ENCODE measurements at regions of chr11 and their contacts with region 1.

Region 1: GRCh38 chr11:59615637-59616395 is at the start of gene OSBP:
- DNase-seq: peak; percentile 98
- CTCF ChIP-seq: no peak

Region 2: DNA sequence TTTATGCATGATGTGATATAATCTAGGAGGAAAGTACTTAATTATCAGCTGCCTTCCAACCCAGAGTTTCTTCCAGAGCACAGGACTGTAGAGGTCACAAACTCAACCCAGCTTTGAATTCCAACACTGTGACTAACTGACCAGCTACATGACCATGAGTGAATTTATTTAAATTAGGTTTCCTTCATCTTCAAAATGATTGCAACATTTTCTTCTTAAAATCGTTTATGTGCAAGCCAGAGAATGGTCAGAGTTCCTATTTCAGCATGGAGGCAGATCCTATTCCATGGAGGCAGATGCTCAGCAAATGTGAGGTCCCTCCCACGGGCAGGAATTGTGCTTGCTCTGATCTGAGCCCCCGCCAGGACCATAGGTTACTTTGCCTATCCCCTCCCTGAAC is 42.6 kb before region 1 on chr11:
- CTCF ChIA-PET with region 1: interaction called, 11 read pairs
- POLR2A ChIA-PET with region 1: no interaction called
- DNase-seq: no peak
- CTCF ChIP-seq: no peak

Region 3: GRCh38 chr11:59668950-59669610 is 53.3 kb after region 1 on chr11 and contains the start of gene PATL1:
- CTCF ChIA-PET with region 1: interaction called, 3 read pairs
- POLR2A ChIA-PET with region 1: interaction called, 19 read pairs
- DNase-seq: peak; percentile 99
- CTCF ChIP-seq: no peak